ENCODE measurements at regions of chr4 and their contacts with region 1.

Region 1: DNA sequence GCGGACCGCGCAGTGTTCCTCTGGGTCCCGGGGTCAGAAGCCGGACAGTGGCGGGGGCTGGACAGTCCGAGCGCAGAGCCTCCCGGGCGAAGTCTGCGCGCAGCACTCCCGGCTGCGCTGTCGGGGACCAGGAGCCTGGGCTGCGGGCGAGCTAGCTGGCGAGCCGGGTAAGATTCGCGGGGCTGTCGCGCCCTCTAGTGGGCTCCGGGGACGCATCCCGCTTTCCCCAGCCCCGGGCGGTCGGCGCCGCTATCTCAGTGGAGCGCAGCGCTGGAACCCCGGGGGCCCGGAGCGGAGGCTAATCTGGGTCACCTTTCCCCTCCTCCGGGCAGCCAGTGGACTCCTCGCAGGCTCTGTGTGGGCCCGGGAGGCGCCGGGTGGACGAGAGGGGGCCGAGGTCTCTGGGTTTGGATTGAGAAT is 4.2 kb downstream of the PDGFRA start:
- DNase-seq: peak; percentile 83
- ATAC-seq: peak; percentile 87
- H3K4me3 Mint-ChIP-seq: peak overlapping the region; percentile 66
- H3K27ac Mint-ChIP-seq: no peak overlapping the region
- H3K4me1 Mint-ChIP-seq: peaks cover 21% of the 10 kb centered on the region
- H3K27me3 Mint-ChIP-seq: peaks cover 51% of the 10 kb centered on the region
- CTCF ChIP-seq: peak; percentile 68

Region 2: DNA sequence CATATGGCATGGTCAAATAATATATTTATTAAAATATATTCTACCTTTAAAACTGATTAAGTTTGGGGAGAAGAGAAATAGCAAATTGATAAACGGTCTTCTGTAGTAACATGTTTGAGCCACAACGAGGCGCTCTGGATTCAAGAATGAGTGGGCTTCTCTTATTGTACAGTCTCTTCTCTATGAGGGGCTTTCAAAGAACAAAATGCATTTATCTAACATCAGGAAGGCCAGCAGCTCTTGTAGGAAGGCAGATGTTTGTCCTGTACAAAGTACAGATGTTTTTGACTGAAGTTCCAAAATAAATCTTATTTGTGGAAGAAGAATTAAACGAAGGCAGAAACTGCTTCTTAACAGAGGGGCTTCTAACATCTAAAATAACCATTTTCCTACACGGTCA is 1217.6 kb before region 1 on chr4:
- CTCF ChIA-PET with region 1: interaction called, 12 read pairs
- POLR2A ChIA-PET with region 1: no interaction called
- intact Hi-C with region 1: no loop called
- DNase-seq: peak; percentile 49
- ATAC-seq: no peak
- H3K4me3 Mint-ChIP-seq: no peak overlapping the region
- H3K27ac Mint-ChIP-seq: no peak overlapping the region
- H3K4me1 Mint-ChIP-seq: peaks cover 24% of the 10 kb centered on the region
- H3K27me3 Mint-ChIP-seq: no peaks in the 10 kb centered on the region
- CTCF ChIP-seq: peak; percentile 81

Region 3: GRCh38 chr4:53702334-53703266 is 530.7 kb before region 1 on chr4:
- CTCF ChIA-PET with region 1: interaction called, 16 read pairs
- POLR2A ChIA-PET with region 1: no interaction called
- intact Hi-C with region 1: loop called (anchors 10 kb)
- DNase-seq: peak; percentile 20
- ATAC-seq: peak; percentile 42
- H3K4me3 Mint-ChIP-seq: peak overlapping the region; percentile 21
- H3K27ac Mint-ChIP-seq: no peak overlapping the region
- H3K4me1 Mint-ChIP-seq: peaks cover 11% of the 10 kb centered on the region
- H3K27me3 Mint-ChIP-seq: peaks cover 23% of the 10 kb centered on the region
- CTCF ChIP-seq: no peak

Region 4: GRCh38 chr4:53914313-53915016 is 318.8 kb before region 1 on chr4:
- CTCF ChIA-PET with region 1: interaction called, 114 read pairs
- POLR2A ChIA-PET with region 1: interaction called, 3 read pairs
- intact Hi-C with region 1: loop called (anchors 5 kb)
- DNase-seq: no peak
- ATAC-seq: peak; percentile 42
- H3K4me3 Mint-ChIP-seq: no peak overlapping the region
- H3K27ac Mint-ChIP-seq: no peak overlapping the region
- H3K4me1 Mint-ChIP-seq: no peaks in the 10 kb centered on the region
- H3K27me3 Mint-ChIP-seq: peaks cover 6% of the 10 kb centered on the region
- CTCF ChIP-seq: no peak

Region 5: GRCh38 chr4:53929955-53930798 is 303.1 kb before region 1 on chr4:
- CTCF ChIA-PET with region 1: interaction called, 101 read pairs
- POLR2A ChIA-PET with region 1: no interaction called
- intact Hi-C with region 1: no loop called
- DNase-seq: peak; percentile 82
- ATAC-seq: peak; percentile 77
- H3K4me3 Mint-ChIP-seq: no peak overlapping the region
- H3K27ac Mint-ChIP-seq: no peak overlapping the region
- H3K4me1 Mint-ChIP-seq: no peaks in the 10 kb centered on the region
- H3K27me3 Mint-ChIP-seq: no peaks in the 10 kb centered on the region
- CTCF ChIP-seq: peak; percentile 77

Region 6: DNA sequence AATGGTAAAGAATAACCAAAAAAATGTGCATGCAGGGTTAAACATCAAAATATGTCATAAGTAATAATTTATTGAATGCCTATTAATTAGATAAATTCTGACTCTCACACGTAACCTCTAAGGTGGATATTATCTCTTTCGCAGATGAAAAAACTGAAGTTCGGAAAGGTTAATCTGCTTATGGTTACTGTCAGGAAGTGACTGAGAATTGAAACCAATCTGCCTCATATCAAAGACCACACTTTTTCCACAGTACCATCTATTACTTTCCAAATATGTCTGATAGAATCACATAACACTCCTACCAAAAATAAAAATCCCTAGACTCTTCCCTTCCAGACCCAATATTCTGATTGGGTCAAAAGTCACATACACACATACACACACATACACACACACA is 175.1 kb before region 1 on chr4:
- CTCF ChIA-PET with region 1: interaction called, 13 read pairs
- POLR2A ChIA-PET with region 1: no interaction called
- intact Hi-C with region 1: no loop called
- DNase-seq: no peak
- ATAC-seq: peak; percentile 68
- H3K4me3 Mint-ChIP-seq: peak overlapping the region; percentile 69
- H3K27ac Mint-ChIP-seq: peak overlapping the region; percentile 76
- H3K4me1 Mint-ChIP-seq: peaks cover 69% of the 10 kb centered on the region
- H3K27me3 Mint-ChIP-seq: no peaks in the 10 kb centered on the region
- CTCF ChIP-seq: no peak

Region 7: DNA sequence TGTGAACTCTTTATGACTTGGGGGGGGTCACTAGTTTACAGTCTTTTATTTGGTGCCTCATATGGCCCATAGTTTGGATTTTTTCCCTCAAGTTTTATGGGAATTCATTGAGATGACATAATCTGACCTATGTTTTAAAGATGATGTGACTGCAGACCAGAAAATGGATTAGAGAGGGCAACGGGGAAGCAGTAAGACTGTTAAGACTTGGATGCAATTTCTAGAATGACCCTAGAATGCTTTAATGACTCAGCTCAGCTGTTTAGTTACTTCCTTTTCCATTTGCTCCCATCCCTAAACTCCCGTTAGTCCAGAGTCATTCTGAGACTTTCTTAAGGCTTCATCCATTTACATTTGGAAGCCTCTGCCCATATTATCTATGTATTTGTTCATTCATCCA is 64.1 kb before region 1 on chr4:
- CTCF ChIA-PET with region 1: no interaction called
- POLR2A ChIA-PET with region 1: no interaction called
- intact Hi-C with region 1: no loop called
- DNase-seq: no peak
- ATAC-seq: no peak
- H3K4me3 Mint-ChIP-seq: no peak overlapping the region
- H3K27ac Mint-ChIP-seq: no peak overlapping the region
- H3K4me1 Mint-ChIP-seq: no peaks in the 10 kb centered on the region
- H3K27me3 Mint-ChIP-seq: peaks cover 10% of the 10 kb centered on the region
- CTCF ChIP-seq: no peak

Region 8: DNA sequence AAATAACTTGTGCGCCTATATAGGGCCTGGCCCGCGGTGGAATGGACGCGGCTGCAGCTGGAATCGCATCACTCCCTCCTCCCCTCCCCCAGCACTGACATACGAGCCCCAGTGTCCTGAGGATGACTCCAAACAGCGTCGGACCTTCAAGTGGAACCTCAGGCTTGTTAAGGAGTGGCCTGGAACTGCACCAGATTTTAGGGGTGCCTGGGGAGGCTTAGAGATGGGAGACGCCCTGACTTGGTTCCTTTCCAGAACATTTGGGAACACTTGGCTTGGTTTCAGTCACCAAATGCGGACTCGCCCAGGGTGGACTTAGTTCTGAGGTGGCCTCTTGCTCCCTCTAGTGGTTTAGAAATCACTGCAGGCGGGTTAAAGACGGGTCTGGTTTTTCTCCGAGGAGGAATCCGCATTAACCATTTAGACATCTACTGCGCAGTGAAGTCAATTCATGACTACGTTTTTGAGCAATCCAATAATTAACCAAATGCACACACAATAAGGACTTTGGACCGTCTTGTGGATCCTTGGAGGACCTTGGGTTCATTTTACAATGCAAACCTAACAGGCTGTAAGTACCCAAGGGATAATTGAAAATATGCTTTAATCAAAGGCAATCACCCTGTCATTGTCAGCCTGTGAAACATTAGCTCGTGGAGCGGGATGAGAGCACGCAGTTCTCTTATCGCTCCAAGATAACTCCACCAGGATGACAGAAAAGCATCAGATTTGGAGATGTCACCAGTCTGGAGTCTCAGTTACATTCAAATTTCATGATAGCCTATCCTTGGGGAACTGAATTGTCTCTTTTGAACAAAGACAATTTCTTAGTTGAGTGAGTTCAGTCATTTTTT is 15.4 kb before region 1 on chr4:
- CTCF ChIA-PET with region 1: interaction called, 36 read pairs
- POLR2A ChIA-PET with region 1: no interaction called
- intact Hi-C with region 1: no loop called
- DNase-seq: peak; percentile 67
- ATAC-seq: peak; percentile 83
- H3K4me3 Mint-ChIP-seq: peak overlapping the region; percentile 42
- H3K27ac Mint-ChIP-seq: no peak overlapping the region
- H3K4me1 Mint-ChIP-seq: peaks cover 3% of the 10 kb centered on the region
- H3K27me3 Mint-ChIP-seq: peaks cover 28% of the 10 kb centered on the region
- CTCF ChIP-seq: peak; percentile 89

Region 9: DNA sequence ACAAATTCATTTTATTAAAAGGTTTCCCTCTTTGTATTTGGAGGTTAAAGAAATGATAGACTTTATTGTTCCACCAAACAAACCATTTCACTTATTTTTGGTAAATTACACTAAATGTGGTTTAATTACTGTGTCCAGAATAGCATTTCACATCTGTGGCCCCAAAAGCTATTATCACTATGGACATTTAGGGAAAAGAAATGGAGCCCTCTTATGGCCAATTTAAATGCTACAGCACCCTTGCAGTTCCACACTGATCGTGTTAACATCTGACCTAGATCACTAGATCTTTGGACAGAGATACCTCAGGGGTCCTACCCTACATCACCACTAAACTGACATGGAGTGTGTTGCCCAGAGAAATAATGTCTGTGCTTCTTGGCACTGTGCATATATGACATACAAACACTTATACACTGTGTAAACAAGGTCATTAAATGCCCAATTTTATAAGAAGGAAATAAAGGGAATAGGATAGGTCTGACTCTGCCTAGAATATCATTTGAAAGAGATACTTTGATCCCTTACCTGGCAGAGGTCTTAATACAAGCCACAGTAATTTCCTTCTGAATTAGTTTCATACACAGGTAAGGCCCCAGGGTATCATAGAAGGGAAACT is 728.2 kb after region 1 on chr4:
- CTCF ChIA-PET with region 1: no interaction called
- POLR2A ChIA-PET with region 1: no interaction called
- intact Hi-C with region 1: no loop called
- DNase-seq: no peak
- ATAC-seq: peak; percentile 60
- H3K4me3 Mint-ChIP-seq: no peak overlapping the region
- H3K27ac Mint-ChIP-seq: no peak overlapping the region
- H3K4me1 Mint-ChIP-seq: peaks cover 15% of the 10 kb centered on the region
- H3K27me3 Mint-ChIP-seq: no peaks in the 10 kb centered on the region
- CTCF ChIP-seq: peak; percentile 38